Activated CD8-positive, alpha-beta T cell treated with anti-CD3 and anti-CD28 coated beads, Interleukin-2, amount 10 ng/mL, durations not matched to agents 7 days and 5 days (primary cell): ENCODE measurements at regions of chr11 and their contacts with region 1.

Region 1: DNA sequence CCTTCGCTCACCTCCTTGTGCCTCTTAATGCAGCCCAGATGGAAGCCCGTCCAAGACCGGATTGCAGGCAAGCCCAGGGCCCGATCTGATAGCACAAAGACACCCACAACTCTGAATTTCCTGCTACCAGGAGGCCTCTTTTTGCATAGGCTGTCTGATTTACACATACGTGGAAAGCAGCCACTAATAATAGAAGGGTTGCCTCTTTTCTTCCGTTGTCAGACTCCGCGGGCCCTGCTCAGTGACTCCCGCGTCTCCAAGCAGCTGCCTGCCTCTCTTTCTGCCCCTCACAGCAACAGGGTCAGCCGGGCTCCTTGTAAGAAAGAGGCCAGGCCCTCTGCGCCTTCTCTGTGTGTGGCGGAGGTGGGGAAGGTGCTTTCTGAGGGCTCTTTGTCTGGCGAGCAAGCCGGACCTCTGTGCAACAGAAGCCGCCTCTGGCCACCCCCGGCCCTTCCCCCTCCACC is 26.7 kb downstream of the FLI1 start:
- DNase-seq: peak; percentile 65
- ATAC-seq: peak; percentile 44
- H3K4me3 Mint-ChIP-seq: peak overlapping the region; percentile 72
- H3K27ac Mint-ChIP-seq: peak overlapping the region; percentile 92
- H3K4me1 Mint-ChIP-seq: peaks cover 99% of the 10 kb centered on the region
- H3K27me3 Mint-ChIP-seq: no peaks in the 10 kb centered on the region

Region 2: DNA sequence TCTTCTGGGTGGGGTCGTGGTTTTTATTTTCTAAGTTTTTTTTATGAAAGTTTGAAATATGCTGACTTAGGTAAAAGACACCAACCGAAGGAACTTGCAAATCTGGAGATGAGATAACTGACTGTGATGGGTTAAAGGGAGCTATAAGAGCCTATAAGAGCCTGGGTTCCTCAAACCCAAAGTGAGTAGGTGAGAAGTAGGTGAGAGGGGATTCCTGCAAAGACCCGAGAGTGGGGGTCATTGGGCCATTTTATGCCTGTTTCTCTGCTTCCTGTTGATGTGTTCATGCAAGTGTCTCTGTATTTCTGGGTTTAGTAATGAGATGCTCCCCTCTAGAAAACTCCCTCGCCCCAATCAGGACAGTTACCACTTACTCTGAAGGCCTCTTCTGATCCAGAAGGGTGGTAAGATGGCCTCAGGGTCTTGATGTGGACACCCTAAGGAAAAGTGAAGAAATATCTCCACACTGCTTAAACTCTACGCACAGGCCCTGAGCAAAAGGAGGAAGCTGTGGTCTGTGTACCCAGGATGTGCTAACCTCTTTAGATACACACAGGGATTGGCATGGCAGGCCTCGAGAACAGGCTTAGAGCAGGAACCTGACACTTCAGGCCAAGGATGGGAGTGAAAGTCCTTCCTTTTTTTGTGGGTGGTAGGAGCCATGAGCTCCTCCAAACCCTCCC is 24.9 kb before region 1 on chr11:
- CTCF ChIA-PET with region 1: interaction called, 5 read pairs
- POLR2A ChIA-PET with region 1: interaction called, 20 read pairs
- DNase-seq: peak; percentile 64
- ATAC-seq: peak; percentile 47
- H3K4me3 Mint-ChIP-seq: peak overlapping the region; percentile 93
- H3K27ac Mint-ChIP-seq: peak overlapping the region; percentile 96
- H3K4me1 Mint-ChIP-seq: peaks cover 69% of the 10 kb centered on the region
- H3K27me3 Mint-ChIP-seq: peaks cover 11% of the 10 kb centered on the region

Region 3: DNA sequence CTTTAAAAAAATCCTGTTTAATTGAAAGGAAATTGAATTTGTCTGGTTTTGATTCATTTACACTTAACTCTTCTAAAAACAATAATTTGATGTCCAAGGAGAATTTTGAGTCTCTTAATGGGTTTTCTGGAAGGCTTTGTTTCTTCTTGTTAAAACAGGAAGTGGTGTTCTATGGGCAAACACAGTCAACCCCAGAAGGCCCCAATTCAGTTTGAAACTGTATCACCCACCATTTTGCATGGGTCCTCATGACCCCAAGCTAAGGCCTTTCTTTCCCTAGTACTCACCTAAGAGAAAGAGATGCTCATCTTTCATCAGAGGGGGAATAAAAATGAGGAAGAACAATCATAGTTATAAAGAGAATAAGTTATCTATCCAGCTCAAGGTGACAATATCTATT is 16.0 kb before region 1 on chr11:
- CTCF ChIA-PET with region 1: interaction called, 10 read pairs
- POLR2A ChIA-PET with region 1: interaction called, 5 read pairs
- DNase-seq: no peak
- ATAC-seq: peak; percentile 46
- H3K4me3 Mint-ChIP-seq: peak overlapping the region; percentile 27
- H3K27ac Mint-ChIP-seq: peak overlapping the region; percentile 64
- H3K4me1 Mint-ChIP-seq: peaks cover 88% of the 10 kb centered on the region
- H3K27me3 Mint-ChIP-seq: no peaks in the 10 kb centered on the region

Region 4: DNA sequence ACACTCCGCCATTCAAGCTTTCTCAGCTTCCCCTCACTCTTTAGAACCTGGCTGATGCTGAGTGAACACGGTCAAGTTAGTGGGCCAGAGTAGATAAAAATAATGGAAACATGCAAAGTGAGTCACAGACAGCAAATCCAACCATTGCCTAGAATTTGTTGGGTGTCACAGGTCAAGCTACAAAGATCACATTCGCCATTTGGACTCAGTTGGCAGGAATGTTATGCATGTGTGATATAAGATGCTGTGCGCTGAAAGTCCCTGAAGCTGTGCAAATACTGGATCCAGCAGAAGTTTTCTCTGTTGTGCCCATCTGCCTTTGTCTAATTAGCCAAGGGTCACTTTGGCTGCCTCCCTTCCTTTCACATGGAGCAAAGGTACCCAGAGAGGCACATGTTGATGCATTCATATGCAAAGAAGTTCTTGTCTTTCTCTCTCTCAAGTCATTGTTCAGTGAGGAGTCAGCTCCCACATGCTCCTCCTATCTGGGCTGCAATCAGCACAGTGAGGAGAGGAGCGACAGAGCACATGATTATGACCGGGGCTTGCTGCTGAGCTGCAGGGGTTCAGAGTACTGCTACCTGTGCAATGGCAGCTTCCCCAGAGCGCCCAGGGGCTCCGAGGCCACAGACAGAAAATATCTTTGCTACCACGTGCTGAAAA is 13.0 kb after region 1 on chr11:
- CTCF ChIA-PET with region 1: interaction called, 30 read pairs
- POLR2A ChIA-PET with region 1: interaction called, 30 read pairs
- DNase-seq: peak; percentile 51
- ATAC-seq: peak; percentile 53
- H3K4me3 Mint-ChIP-seq: peak overlapping the region; percentile 61
- H3K27ac Mint-ChIP-seq: peak overlapping the region; percentile 78
- H3K4me1 Mint-ChIP-seq: peaks cover 98% of the 10 kb centered on the region
- H3K27me3 Mint-ChIP-seq: no peaks in the 10 kb centered on the region